Aorta (tissue), 5 donors: ENCODE measurements at regions of chr2 and their contacts with region 1.

Region 1: DNA sequence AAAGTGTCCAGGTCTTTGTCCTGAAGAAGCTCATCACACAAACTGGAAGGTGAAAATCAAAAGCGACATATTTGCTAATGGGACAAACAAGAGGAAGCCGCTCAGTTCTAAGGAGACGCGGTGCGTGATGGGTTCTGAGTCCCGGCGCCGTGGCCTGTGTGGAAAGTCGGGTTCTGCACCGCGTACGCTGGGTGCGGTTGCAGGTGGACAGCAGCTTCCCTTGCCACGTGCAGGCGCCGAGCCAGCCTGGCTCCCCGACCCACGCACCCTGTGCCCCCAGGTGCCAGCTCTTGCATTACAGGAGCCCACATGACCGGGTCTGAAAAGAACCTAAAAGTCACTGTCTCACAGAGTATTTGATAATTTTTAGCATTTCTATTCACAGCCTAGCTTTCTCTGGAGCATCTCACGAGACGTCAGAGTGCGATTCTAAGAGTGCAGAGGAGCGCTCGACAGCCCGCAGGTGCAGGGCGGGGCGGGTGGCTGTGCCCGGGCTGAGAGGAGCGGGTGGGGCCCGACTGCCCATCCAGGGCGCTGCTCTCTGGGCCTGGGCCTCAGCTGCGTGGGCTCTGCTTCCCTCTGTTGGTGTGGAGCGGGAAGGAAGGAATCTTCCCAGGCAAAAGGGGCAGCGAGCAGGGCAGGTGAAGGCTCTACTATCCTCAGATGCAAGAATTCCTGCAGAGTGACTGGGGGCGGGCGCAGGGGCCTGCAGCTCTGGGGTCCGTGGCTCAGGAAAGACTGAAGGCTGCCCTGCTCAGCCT is 39.4 kb downstream of the MYT1L start:
- DNase-seq: no peak
- ATAC-seq: peak; percentile 47
- H3K4me3 ChIP-seq: no peak overlapping the region
- H3K27ac ChIP-seq: no peak overlapping the region
- H3K4me1 ChIP-seq: no peaks in the 10 kb centered on the region
- H3K27me3 ChIP-seq: peaks cover 0 to 3% of the 10 kb centered on the region in 2 donors

Region 2: DNA sequence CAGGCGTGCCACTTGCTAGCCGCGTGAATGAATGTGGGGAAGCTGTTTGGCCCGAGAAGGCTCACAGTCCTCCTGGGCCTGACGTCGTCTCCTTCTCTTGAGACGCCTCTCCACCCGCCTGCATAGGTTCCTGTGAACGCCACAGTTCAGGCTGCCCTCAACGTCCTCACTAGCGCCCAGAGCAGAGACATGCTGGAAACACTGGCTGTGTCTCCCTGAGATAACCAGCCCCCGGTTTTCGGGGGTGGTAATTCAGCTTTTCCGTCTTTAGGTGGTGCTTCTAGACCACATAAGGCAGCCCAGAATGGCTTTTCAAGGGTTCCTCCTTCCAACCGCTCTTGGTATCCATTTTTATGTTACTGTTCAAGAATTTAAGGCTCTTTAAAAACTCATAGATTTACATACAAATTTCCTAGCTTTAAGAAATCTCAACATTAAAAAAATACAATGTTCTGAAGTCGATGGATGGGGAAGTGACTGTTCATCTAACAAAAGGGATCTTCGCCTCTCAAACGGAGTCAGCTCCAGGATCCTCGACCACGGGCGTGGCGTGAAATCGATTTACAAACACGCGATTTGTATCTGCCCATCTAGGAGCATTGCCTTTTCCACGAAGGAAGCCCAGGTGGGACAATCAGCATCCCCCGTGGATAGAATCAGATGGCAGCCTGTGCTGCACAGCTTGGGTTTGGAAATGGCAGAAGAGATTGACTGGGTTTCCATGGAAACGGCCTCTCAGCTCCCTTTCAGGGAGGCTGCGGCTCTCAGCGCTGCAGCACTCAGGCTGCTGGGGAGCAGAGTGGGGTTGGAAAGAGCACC is 436.7 kb before region 1 on chr2:
- intact Hi-C with region 1: loop called in 1 of 2 experiments (anchors 5 kb)
- DNase-seq: no peak
- ATAC-seq: peak; percentile 67
- H3K4me3 ChIP-seq: no peak overlapping the region
- H3K27ac ChIP-seq: no peak overlapping the region
- H3K4me1 ChIP-seq: no peaks in the 10 kb centered on the region
- H3K27me3 ChIP-seq: no peaks in the 10 kb centered on the region

Region 3: DNA sequence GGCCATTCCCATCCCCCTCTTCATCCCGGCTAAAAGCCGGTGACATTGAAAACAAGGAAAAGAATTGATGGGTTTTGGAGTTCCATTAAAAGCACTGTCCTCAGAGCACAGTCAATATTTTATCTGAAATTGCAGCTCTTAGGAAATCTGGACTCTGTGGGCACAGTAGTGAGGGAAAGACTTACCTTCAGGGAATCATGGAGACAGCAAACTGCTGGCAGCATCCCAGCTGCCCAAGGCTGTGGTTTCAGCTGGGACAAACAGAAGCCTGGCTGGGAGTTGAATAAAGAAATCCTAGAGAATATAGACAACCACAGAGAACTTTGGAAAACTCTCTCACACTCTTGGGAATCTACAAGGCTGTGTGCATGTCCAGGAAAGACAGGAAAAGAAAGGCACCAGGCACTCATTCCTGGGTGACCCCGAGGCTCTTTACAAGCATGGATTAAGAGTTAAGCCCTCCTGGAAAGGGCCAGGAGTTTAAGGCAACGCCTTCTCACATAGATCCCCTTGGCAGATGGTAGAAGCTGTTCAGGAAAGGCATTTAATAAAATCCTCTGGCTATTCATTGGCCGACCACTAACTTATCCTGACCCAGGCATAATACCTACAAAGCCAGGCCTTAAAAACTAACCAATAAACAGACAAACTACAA is 215.7 kb before region 1 on chr2:
- intact Hi-C with region 1: no loop called
- DNase-seq: no peak
- ATAC-seq: no peak
- H3K4me3 ChIP-seq: no peak overlapping the region
- H3K27ac ChIP-seq: no peak overlapping the region
- H3K4me1 ChIP-seq: no peaks in the 10 kb centered on the region
- H3K27me3 ChIP-seq: no peaks in the 10 kb centered on the region

Region 4: DNA sequence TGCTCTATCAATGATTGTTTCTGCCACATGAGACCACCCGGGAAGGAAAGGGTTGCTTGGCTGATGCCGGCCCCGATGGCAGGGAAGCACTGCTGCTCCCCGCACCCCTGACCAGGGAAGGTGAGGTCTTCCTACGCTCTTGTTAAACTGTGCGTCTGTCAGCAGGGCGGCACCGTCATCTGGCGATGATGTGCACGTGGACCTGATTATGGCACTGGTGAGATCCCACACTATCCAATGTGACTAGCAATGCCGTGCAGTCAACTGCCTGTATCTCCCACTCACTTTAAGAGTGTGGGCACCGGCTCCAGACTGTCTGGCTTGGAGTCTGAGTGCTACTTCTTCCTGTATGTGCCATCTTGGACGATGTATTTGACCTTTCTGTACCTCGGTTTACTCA is 169.8 kb before region 1 on chr2:
- intact Hi-C with region 1: loop called in 1 of 2 experiments (anchors 2 kb)
- DNase-seq: no peak
- ATAC-seq: no peak
- H3K4me3 ChIP-seq: no peak overlapping the region
- H3K27ac ChIP-seq: no peak overlapping the region
- H3K4me1 ChIP-seq: no peaks in the 10 kb centered on the region
- H3K27me3 ChIP-seq: no peaks in the 10 kb centered on the region

Region 5: DNA sequence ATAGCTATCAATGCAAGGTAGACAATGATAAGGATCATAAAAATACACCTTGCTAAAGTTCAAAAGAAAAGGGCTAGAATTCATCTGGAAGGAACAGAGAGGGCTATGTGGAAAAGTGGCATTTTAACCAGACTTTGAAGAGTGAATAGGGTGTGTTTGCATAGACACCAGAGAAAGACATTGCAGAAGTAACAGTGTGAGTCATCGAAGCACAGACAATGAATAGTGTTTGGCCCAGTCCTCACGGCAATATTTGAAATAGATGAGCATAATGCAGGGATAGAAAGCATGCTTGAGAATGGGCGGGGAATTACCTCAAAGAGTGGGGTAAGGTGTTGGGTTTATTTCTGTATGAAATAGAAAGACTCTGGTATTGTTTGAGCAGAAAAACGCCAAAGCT is 15.2 kb after region 1 on chr2:
- intact Hi-C with region 1: no loop called
- DNase-seq: no peak
- ATAC-seq: no peak
- H3K4me3 ChIP-seq: no peak overlapping the region
- H3K27ac ChIP-seq: no peak overlapping the region
- H3K4me1 ChIP-seq: no peaks in the 10 kb centered on the region
- H3K27me3 ChIP-seq: no peaks in the 10 kb centered on the region

Region 6: GRCh38 chr2:2452961-2453360 is 161.3 kb after region 1 on chr2:
- intact Hi-C with region 1: no loop called
- DNase-seq: no peak
- ATAC-seq: no peak
- H3K4me3 ChIP-seq: no peak overlapping the region
- H3K27ac ChIP-seq: no peak overlapping the region
- H3K4me1 ChIP-seq: no peaks in the 10 kb centered on the region
- H3K27me3 ChIP-seq: no peaks in the 10 kb centered on the region